HEK293 (cell line): ENCODE measurements at regions of chr3 and their contacts with region 1.

Region 1: GRCh38 chr3:151838583-151839312 is 24.8 kb downstream of the AADAC start:
- H3K4me3 ChIP-seq: no peak overlapping the region
- H3K27ac ChIP-seq: no peak overlapping the region
- H3K4me1 ChIP-seq: no peaks in the 10 kb centered on the region
- CTCF ChIP-seq: peak; percentile 16; the same call in 1 of the 2 replicates

Region 2: GRCh38 chr3:151439652-151440129 is 399.1 kb before region 1 on chr3:
- CTCF ChIA-PET with region 1: interaction called, 48 read pairs
- POLR2A ChIA-PET with region 1: no interaction called
- H3K4me3 ChIP-seq: no peak overlapping the region
- H3K27ac ChIP-seq: no peak overlapping the region
- H3K4me1 ChIP-seq: no peaks in the 10 kb centered on the region
- CTCF ChIP-seq: peak; percentile 46

Region 3: DNA sequence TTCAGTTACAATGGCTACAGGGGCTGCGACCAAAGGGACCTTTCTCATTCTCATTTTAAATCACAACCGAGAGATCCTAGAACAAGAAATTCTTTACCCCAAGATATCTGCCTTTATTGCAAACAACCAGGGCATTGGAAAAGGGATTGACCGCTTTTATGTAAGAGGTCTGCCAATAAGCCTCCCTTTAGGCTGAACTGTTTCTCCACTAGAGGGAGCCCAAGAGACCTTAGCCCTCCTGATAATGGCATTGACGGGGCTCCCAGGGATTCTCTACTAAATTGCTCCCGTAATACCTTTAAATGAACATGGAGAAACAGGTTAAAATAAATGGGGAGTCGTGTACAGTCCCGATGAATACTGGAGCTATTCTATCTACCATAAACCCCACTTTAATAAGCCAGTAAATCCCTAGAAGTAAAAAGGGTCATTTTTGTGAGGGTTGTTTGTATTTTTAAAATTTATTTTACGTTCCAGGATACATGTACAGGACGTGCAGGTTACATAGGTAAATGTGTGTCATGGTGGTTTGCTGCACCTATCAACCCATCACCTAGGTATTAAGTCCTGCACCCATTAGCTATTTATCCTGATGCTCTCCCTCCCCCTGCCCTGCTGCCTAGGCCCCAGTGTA is 370.3 kb before region 1 on chr3:
- CTCF ChIA-PET with region 1: interaction called, 19 read pairs
- POLR2A ChIA-PET with region 1: no interaction called
- H3K4me3 ChIP-seq: no peak overlapping the region
- H3K27ac ChIP-seq: no peak overlapping the region
- H3K4me1 ChIP-seq: no peaks in the 10 kb centered on the region
- CTCF ChIP-seq: no peak

Region 4: GRCh38 chr3:151804267-151804666 is 34.5 kb before region 1 on chr3:
- CTCF ChIA-PET with region 1: no interaction called
- POLR2A ChIA-PET with region 1: no interaction called
- H3K4me3 ChIP-seq: no peak overlapping the region
- H3K27ac ChIP-seq: no peak overlapping the region
- H3K4me1 ChIP-seq: no peaks in the 10 kb centered on the region
- CTCF ChIP-seq: no peak

Region 5: DNA sequence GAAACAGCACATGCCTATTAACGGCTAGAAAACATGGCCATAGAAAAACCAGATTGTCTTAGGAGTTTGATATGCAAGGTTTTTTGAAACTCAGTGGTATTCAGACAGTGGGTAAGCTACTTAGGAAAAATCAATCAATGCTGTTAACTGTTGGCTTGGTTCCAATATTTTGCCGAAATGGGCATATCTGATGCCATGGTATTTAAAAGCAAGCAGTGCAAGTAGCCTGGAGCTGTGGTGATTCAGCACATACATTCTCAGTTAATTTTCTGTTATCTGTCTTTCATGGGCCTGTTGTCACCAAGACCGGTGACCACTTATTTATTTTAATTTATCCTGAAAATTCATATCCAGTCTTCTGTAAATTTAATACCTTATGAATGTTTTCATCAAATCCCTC is 17.4 kb after region 1 on chr3:
- CTCF ChIA-PET with region 1: no interaction called
- POLR2A ChIA-PET with region 1: no interaction called
- H3K4me3 ChIP-seq: no peak overlapping the region
- H3K27ac ChIP-seq: no peak overlapping the region
- H3K4me1 ChIP-seq: no peaks in the 10 kb centered on the region
- CTCF ChIP-seq: no peak